WTC11 (cell line): ENCODE measurements at regions of chr3 and their contacts with region 1.

Region 1: GRCh38 chr3:101163554-101163953 is 156.8 kb downstream of the IMPG2 start:
- DNase-seq: no peak
- ATAC-seq: no peak
- H3K4me3 Mint-ChIP-seq: no peak overlapping the region
- H3K27ac Mint-ChIP-seq: no peak overlapping the region
- H3K4me1 Mint-ChIP-seq: no peaks in the 10 kb centered on the region
- H3K27me3 Mint-ChIP-seq: no peaks in the 10 kb centered on the region; the same call in 1 of the 2 replicates
- CTCF ChIP-seq: no peak

Region 2: GRCh38 chr3:100999160-100999559 is 164.4 kb before region 1 on chr3:
- CTCF ChIA-PET with region 1: no interaction called
- POLR2A ChIA-PET with region 1: no interaction called
- DNase-seq: no peak
- ATAC-seq: no peak
- H3K4me3 Mint-ChIP-seq: no peak overlapping the region
- H3K27ac Mint-ChIP-seq: no peak overlapping the region
- H3K4me1 Mint-ChIP-seq: no peaks in the 10 kb centered on the region
- H3K27me3 Mint-ChIP-seq: no peaks in the 10 kb centered on the region; the same call in 1 of the 2 replicates
- CTCF ChIP-seq: no peak

Region 3: GRCh38 chr3:101216710-101217465 is 53.3 kb after region 1 on chr3:
- CTCF ChIA-PET with region 1: no interaction called
- POLR2A ChIA-PET with region 1: no interaction called
- DNase-seq: no peak
- ATAC-seq: no peak
- H3K4me3 Mint-ChIP-seq: no peak overlapping the region
- H3K27ac Mint-ChIP-seq: no peak overlapping the region
- H3K4me1 Mint-ChIP-seq: no peaks in the 10 kb centered on the region
- H3K27me3 Mint-ChIP-seq: peaks cover 3% of the 10 kb centered on the region; the same call in 1 of the 2 replicates
- CTCF ChIP-seq: no peak

Region 4: GRCh38 chr3:101561630-101562328 is 398.2 kb after region 1 on chr3 and contains the start of gene TRMT10C:
- CTCF ChIA-PET with region 1: no interaction called
- POLR2A ChIA-PET with region 1: interaction called, 10 read pairs
- DNase-seq: peak; percentile 93
- ATAC-seq: peak; percentile 98
- H3K4me3 Mint-ChIP-seq: peak within 1 kb of the TSS; percentile 96
- H3K27ac Mint-ChIP-seq: peak within 1 kb of the TSS; percentile 98
- H3K4me1 Mint-ChIP-seq: peaks cover 20% of the 10 kb centered on the region
- H3K27me3 Mint-ChIP-seq: no peaks in the 10 kb centered on the region; the same call in 1 of the 2 replicates
- CTCF ChIP-seq: no peak
- total RNA-seq, gene TRMT10C: 35.2 to 41.7 TPM (median 36.3 TPM) in 3 replicates